Cardiac septum (tissue), 1 donor: ENCODE measurements at regions of chr4 and their contacts with region 1.

Region 1: DNA sequence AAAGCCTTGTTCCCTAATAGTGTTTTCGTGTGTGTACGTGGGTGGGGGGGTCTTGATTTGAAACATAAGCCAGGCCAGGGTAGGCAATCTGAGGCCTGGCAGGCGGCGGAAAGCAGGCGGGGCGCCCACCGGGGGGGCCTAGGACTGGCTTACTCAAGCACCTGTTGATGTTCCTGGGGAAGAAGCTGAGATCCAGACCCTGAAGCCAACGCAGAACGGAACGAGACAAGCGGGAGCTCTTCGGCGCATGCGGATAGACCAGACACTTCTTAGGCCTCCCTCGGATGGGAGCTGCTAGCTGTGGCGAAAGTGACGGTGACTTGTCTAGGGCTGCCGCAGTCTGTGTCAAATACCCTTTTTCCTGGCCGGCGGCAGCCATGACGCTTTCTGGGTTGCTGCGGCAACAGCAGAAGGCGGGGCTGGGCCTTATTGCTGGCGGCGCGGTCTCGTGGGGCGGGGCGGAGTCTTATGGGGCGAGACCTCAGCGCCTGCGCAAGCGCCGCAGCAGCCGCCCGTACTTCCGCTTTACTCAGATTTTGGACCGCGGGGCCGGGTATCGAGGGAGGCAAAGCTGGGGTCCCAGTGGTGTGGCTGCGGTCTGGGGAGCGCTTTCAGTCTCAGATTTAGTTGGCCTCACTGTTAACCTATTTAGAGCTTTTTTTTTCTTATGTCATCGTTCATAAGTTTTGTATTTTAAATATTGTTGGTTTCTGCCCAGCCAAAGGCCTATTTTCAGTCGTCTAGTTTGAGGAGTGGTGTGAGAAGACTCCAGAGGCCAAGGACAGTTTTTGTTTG is at the start of gene SPATA4:
- DNase-seq: peak; percentile 97
- total RNA-seq, gene SPATA4: 0.22 TPM

Region 2: GRCh38 chr4:176230836-176231235 is 35.5 kb after region 1 on chr4:
- intact Hi-C with region 1: loop called (anchors 5 kb)
- DNase-seq: no peak

Region 3: GRCh38 chr4:176319704-176320339 is 124.4 kb after region 1 on chr4 and contains the start of gene SPCS3:
- intact Hi-C with region 1: loop called (anchors 2 kb)
- DNase-seq: peak; percentile 99
- total RNA-seq, gene SPCS3: 115 TPM